Endothelial cell of umbilical vein (primary cell): ENCODE measurements at regions of chr7 and their contacts with region 1.

Region 1: DNA sequence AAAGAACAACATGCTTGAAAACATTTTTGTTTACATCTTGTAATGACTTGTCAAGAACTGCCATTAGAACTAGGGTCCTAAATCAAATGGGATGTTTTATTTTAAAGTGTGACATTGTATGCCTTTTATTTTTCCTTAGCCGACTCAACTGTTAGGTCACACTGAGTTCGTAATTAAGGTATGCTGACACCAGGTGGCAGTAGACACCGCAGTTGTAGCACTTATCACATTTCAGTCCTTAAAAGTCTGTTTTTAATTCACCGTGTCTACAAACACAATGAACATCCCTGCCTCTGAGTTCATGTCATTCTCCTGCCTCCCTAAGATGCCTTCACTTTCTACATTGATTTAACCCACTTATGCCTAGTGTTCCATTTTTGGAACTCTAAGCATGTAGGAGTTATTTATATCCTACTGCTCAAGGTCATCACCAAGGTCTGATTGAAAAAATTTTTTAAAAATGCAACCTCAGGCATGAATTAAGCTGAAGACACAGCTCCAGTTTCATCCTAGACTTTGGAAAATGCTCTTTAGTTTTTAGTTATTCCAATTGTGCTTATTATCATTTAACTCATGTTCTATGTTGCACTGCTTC is 186.1 kb downstream of the BMPER start:
- DNase-seq: peak; percentile 58
- H3K4me3 ChIP-seq: no peak overlapping the region
- H3K27ac ChIP-seq: no peak overlapping the region
- H3K4me1 ChIP-seq: no peaks in the 10 kb centered on the region
- H3K27me3 ChIP-seq: no peaks in the 10 kb centered on the region
- CTCF ChIP-seq: peak; percentile 44 to 52
- POLR2A ChIP-seq: no peak

Region 2: DNA sequence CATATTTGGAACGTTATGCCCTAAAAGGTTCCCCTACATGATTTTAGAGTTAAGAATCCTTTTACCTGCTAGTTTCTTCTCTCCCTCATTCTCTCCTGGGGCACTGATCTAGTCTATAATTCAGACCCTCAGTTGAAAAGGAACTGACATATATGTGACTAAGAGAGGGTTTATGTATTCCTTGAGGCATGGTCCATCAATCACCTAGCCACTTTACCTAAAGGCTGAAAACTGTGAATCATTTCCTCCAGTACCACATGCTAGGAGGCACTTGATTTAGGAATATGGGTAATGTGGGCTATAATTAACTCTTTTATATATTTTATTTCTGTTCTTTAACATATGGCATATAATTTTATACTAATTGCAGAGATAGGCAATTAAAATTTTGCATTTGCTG is 658.6 kb before region 1 on chr7:
- CTCF ChIA-PET with region 1: no interaction called
- POLR2A ChIA-PET with region 1: no interaction called
- dilution Hi-C with region 1: no loop called
- intact Hi-C with region 1: no loop called
- DNase-seq: no peak
- H3K4me3 ChIP-seq: no peak overlapping the region
- H3K27ac ChIP-seq: no peak overlapping the region
- H3K4me1 ChIP-seq: no peaks in the 10 kb centered on the region
- H3K27me3 ChIP-seq: no peaks in the 10 kb centered on the region
- CTCF ChIP-seq: no peak
- POLR2A ChIP-seq: no peak

Region 3: GRCh38 chr7:33764752-33765451 is 326.5 kb before region 1 on chr7:
- CTCF ChIA-PET with region 1: no interaction called
- POLR2A ChIA-PET with region 1: no interaction called
- dilution Hi-C with region 1: no loop called
- intact Hi-C with region 1: loop called (anchors 10 kb)
- DNase-seq: peak; percentile 94
- H3K4me3 ChIP-seq: no peak overlapping the region
- H3K27ac ChIP-seq: peak overlapping the region; percentile 57
- H3K4me1 ChIP-seq: peaks cover 12% of the 10 kb centered on the region
- H3K27me3 ChIP-seq: no peaks in the 10 kb centered on the region
- CTCF ChIP-seq: no peak
- POLR2A ChIP-seq: no peak

Region 4: DNA sequence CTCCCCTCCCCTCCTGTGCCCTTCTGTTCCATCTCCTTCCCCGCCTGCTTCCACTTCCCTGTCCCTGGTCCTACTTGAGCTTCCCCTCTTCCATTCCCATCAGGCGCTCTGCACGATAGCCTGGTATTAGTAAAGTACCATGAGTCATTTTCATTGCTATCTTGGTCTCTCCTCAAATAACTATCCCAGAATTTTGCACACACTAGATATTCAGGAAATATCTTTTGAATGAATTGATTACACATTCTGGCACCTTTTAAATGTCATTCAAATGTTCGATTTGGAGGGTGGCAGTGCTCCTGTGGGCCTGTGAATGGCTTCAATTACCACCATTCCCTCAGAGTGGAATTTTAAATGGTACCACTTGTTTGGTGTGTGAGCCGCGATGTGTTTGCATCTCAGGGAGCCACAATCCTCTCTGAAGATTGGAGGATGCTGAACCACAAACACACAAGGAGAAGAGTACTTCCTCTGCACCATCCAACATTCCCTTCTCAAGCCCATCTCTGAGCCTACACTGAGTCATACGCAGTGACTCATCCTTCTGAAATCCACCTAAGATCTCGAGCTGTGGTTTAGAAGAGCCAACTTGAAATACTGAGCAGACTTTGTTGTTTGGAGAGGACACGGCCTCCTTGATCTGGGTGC is 104.4 kb before region 1 on chr7:
- CTCF ChIA-PET with region 1: interaction called, 266 read pairs
- POLR2A ChIA-PET with region 1: no interaction called
- dilution Hi-C with region 1: no loop called
- intact Hi-C with region 1: loop called (anchors 1 kb)
- DNase-seq: peak; percentile 73
- H3K4me3 ChIP-seq: no peak overlapping the region
- H3K27ac ChIP-seq: peak overlapping the region; percentile 24
- H3K4me1 ChIP-seq: peaks cover 12% of the 10 kb centered on the region
- H3K27me3 ChIP-seq: no peaks in the 10 kb centered on the region
- CTCF ChIP-seq: no peak
- POLR2A ChIP-seq: no peak

Region 5: GRCh38 chr7:34165929-34166550 is 74.6 kb after region 1 on chr7:
- CTCF ChIA-PET with region 1: no interaction called
- POLR2A ChIA-PET with region 1: no interaction called
- dilution Hi-C with region 1: no loop called
- intact Hi-C with region 1: loop called (anchors 5 kb)
- DNase-seq: peak; percentile 37
- H3K4me3 ChIP-seq: no peak overlapping the region
- H3K27ac ChIP-seq: no peak overlapping the region
- H3K4me1 ChIP-seq: no peaks in the 10 kb centered on the region
- H3K27me3 ChIP-seq: peaks cover 0 to 2% of the 10 kb centered on the region in 2 experiments
- CTCF ChIP-seq: peak; percentile 37 to 59
- POLR2A ChIP-seq: no peak